ENCODE measurements at regions of chr11 and their contacts with region 1.

Region 1: DNA sequence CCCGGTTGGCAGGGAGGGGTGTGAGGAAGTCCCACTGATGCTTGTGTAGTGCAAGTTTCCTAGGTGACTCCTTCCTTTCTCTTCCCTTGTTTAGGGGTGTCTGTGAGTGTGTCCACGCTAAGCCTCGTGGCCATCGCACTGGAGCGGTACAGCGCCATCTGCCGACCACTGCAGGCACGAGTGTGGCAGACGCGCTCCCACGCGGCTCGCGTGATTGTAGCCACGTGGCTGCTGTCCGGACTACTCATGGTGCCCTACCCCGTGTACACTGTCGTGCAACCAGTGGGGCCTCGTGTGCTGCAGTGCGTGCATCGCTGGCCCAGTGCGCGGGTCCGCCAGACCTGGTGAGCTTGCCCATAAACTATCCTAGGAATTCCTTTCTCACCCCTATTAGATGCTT is 10.4 kb downstream of the CCKBR start:
- DNase-seq: no peak
- H3K4me3 ChIP-seq: no peak overlapping the region
- H3K27ac ChIP-seq: no peak overlapping the region
- H3K4me1 ChIP-seq: no peaks in the 10 kb centered on the region
- H3K27me3 ChIP-seq: peaks cover 0 to 7% of the 10 kb centered on the region in 2 experiments
- CTCF ChIP-seq: no peak
- POLR2A ChIP-seq: no peak

Region 2: GRCh38 chr11:6234387-6235107 is 35.4 kb before region 1 on chr11 and contains the start of gene FHIP1B:
- CTCF ChIA-PET with region 1: no interaction called
- POLR2A ChIA-PET with region 1: no interaction called
- dilution Hi-C with region 1: no loop called
- intact Hi-C with region 1: no loop called
- DNase-seq: peak; percentile 100
- H3K4me3 ChIP-seq: peak within 1 kb of the TSS; percentile 69 to 90 (median 78)
- H3K27ac ChIP-seq: peak within 1 kb of the TSS; percentile 10
- H3K4me1 ChIP-seq: peaks cover 6% of the 10 kb centered on the region
- H3K27me3 ChIP-seq: peaks cover 3 to 6% of the 10 kb centered on the region in 2 experiments
- CTCF ChIP-seq: no peak
- POLR2A ChIP-seq: no peak
- total RNA-seq, gene FHIP1B: 21.3 and 23.0 TPM in 2 replicates

Region 3: DNA sequence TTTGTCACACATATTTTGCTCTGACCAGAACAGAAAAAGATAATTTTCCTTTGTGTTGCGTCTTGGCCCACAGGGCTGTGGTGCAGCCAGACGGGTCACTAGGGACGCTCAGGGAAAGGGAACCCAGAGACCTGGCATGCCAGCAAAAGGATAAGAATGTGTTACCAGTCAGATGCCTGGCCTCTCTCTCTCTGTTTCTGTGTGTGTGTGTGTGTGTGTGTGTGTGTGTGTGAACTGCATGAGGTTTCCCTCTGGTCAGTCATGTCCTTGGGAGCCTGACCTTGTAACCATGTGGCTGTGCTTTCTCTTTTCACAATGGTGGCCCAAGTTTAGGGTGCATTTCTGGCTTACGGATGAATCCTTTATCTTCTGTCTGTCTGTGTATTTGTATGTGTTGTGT is 15.0 kb after region 1 on chr11:
- CTCF ChIA-PET with region 1: interaction called, 10 read pairs
- POLR2A ChIA-PET with region 1: no interaction called
- dilution Hi-C with region 1: no loop called
- intact Hi-C with region 1: no loop called
- DNase-seq: no peak
- H3K4me3 ChIP-seq: no peak overlapping the region
- H3K27ac ChIP-seq: no peak overlapping the region
- H3K4me1 ChIP-seq: no peaks in the 10 kb centered on the region
- H3K27me3 ChIP-seq: peaks cover 22 to 34% of the 10 kb centered on the region in 2 experiments
- CTCF ChIP-seq: no peak
- POLR2A ChIP-seq: no peak

Measured in endothelial cell of umbilical vein (primary cell).